SK-N-SH (cell line): ENCODE measurements at regions of chr13 and their contacts with region 1.

Region 1: GRCh38 chr13:113724780-113725315 is 34.2 kb upstream of the TMEM255B start:
- DNase-seq: peak; percentile 90
- H3K4me3 ChIP-seq: peak overlapping the region; percentile 53 to 71
- H3K27ac ChIP-seq: peak overlapping the region; percentile 10 to 81; a peak in 2 of 4 replicates
- H3K4me1 ChIP-seq: peaks cover 0 to 35% of the 10 kb centered on the region in 2 experiments; a peak in 1 of 4 replicates
- H3K27me3 ChIP-seq: no peaks in the 10 kb centered on the region
- CTCF ChIP-seq: peak; percentile 78
- EP300 ChIP-seq: no peak
- RAD21 ChIP-seq: peak; percentile 71

Region 2: DNA sequence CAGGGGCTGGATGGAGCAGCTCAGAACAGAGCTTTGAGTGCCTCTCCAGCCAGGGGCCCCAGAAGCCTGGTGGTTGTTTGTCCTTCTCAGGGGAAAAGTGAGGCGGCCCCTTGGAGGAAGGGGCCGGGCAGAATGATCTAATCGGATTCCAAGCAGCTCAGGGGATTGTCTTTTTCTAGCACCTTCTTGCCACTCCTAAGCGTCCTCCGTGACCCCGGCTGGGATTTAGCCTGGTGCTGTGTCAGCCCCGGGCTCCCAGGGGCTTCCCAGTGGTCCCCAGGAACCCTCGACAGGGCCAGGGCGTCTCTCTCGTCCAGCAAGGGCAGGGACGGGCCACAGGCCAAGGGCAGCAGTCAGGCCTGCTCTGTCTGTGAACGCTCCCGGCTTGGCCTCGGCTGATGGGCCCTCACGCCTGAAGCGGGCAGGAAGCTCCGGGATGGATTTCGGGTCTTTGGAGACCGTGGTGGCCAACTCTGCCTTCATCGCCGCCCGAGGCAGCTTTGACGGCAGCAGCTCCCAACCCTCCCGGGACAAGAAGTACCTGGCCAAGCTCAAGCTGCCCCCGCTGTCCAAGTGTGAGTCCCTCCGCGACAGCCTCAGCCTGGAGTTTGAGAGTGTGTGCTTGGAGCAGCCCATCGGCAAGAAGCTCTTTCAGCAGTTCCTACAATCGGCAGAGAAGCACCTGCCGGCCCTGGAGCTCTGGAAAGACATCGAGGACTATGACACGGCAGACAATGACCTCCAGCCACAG is 57.7 kb before region 1 on chr13 and contains the start of gene GRK1:
- CTCF ChIA-PET with region 1: interaction called, 19 read pairs
- POLR2A ChIA-PET with region 1: interaction called, 3 read pairs
- DNase-seq: no peak
- H3K4me3 ChIP-seq: no peak within 1 kb of the TSS
- H3K27ac ChIP-seq: no peak within 1 kb of the TSS
- H3K4me1 ChIP-seq: no peaks in the 10 kb centered on the region; a peak in 1 of 4 replicates
- H3K27me3 ChIP-seq: no peaks in the 10 kb centered on the region
- CTCF ChIP-seq: no peak
- EP300 ChIP-seq: no peak
- RAD21 ChIP-seq: no peak
- polyA plus RNA-seq, gene GRK1: 0.08 and 0.12 TPM in 2 replicates